Naive thymus-derived CD4-positive, alpha-beta T cell (primary cell): ENCODE measurements at regions of chr2 and their contacts with region 1.

Region 1: DNA sequence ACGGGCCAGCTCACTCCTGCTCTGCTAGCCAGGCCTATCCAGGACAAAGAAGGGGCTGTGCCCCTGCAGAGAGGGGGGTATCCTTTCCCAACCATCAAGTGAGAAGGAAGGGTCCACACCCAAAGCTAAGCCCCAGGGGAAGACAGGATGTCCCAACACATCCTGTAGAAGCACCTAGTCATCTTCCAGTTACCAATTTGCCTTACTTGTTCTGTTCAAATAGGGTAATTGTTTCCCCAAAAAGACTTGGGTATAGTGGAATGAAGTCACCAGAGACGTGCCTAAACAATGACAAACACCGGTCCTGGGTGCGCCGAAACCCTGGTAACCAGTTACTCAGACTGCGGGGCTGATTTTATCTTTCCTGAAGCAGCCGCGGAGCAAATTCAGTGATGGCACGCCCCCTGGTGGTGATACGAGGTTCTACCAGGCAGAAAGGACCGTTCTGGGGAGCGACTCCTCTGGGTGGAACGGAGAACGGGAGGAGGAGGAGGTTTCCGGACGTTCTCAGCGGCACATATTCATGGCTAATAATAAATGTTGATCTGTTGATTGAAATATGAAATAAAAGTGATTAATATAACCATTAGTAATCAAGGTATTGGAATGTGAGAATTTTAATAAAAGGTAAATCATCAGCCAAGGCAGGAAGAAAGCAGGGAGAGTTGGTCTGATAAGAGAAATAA is 109.3 kb upstream of the STON1 start:
- DNase-seq: peak; percentile 79 to 92 (median 88)
- ATAC-seq: peak; percentile 97
- H3K4me3 ChIP-seq: peak overlapping the region; percentile 33
- H3K4me3 Mint-ChIP-seq: peak overlapping the region in 9 of 10 donors; percentile 16 to 68 (median 49)
- H3K27ac ChIP-seq: peak overlapping the region; percentile 25
- H3K27ac Mint-ChIP-seq: peak overlapping the region in 8 of 9 donors; percentile 52 to 82 (median 72)
- H3K4me1 ChIP-seq: peaks cover 4 to 14% of the 10 kb centered on the region in 2 donors
- H3K4me1 Mint-ChIP-seq: peaks cover 14 to 39% (median 32%) of the 10 kb centered on the region in 7 donors
- H3K27me3 ChIP-seq: no peaks in the 10 kb centered on the region
- H3K27me3 Mint-ChIP-seq: peaks cover 0 to 4% (median 0%) of the 10 kb centered on the region in 5 donors

Region 2: GRCh38 chr2:47833516-47833968 is 587.1 kb before region 1 on chr2:
- CTCF ChIA-PET with region 1: no interaction called
- POLR2A ChIA-PET with region 1: no interaction called
- intact Hi-C with region 1: no loop called
- DNase-seq: no peak
- ATAC-seq: no peak
- H3K4me3 ChIP-seq: no peak overlapping the region
- H3K4me3 Mint-ChIP-seq: no peak overlapping the region
- H3K27ac ChIP-seq: no peak overlapping the region
- H3K27ac Mint-ChIP-seq: no peak overlapping the region
- H3K4me1 ChIP-seq: no peaks in the 10 kb centered on the region
- H3K4me1 Mint-ChIP-seq: peaks cover 0 to 5% (median 0%) of the 10 kb centered on the region in 7 donors
- H3K27me3 ChIP-seq: no peaks in the 10 kb centered on the region
- H3K27me3 Mint-ChIP-seq: no peaks in the 10 kb centered on the region

Region 3: GRCh38 chr2:47862949-47863348 is 557.7 kb before region 1 on chr2:
- CTCF ChIA-PET with region 1: interaction called, 5 read pairs
- POLR2A ChIA-PET with region 1: interaction called, 3 read pairs
- intact Hi-C with region 1: loop called in 1 of 2 experiments (anchors 5 kb)
- DNase-seq: no peak
- ATAC-seq: no peak
- H3K4me3 ChIP-seq: no peak overlapping the region
- H3K4me3 Mint-ChIP-seq: no peak overlapping the region
- H3K27ac ChIP-seq: no peak overlapping the region
- H3K27ac Mint-ChIP-seq: peak overlapping the region in 6 of 9 donors; percentile 1 to 61 (median 26)
- H3K4me1 ChIP-seq: peaks cover 0 to 15% of the 10 kb centered on the region in 2 donors
- H3K4me1 Mint-ChIP-seq: peaks cover 25 to 87% (median 76%) of the 10 kb centered on the region in 7 donors
- H3K27me3 ChIP-seq: no peaks in the 10 kb centered on the region
- H3K27me3 Mint-ChIP-seq: no peaks in the 10 kb centered on the region

Region 4: GRCh38 chr2:48200620-48201293 is 219.9 kb before region 1 on chr2:
- CTCF ChIA-PET with region 1: no interaction called
- POLR2A ChIA-PET with region 1: no interaction called
- intact Hi-C with region 1: loop called in 1 of 2 experiments (anchors 5 kb)
- DNase-seq: no peak
- ATAC-seq: no peak
- H3K4me3 ChIP-seq: no peak overlapping the region
- H3K4me3 Mint-ChIP-seq: no peak overlapping the region
- H3K27ac ChIP-seq: no peak overlapping the region
- H3K27ac Mint-ChIP-seq: no peak overlapping the region
- H3K4me1 ChIP-seq: no peaks in the 10 kb centered on the region
- H3K4me1 Mint-ChIP-seq: peaks cover 0 to 7% (median 0%) of the 10 kb centered on the region in 7 donors
- H3K27me3 ChIP-seq: no peaks in the 10 kb centered on the region
- H3K27me3 Mint-ChIP-seq: no peaks in the 10 kb centered on the region

Region 5: GRCh38 chr2:48221846-48222516 is 198.7 kb before region 1 on chr2:
- CTCF ChIA-PET with region 1: no interaction called
- POLR2A ChIA-PET with region 1: no interaction called
- intact Hi-C with region 1: no loop called
- DNase-seq: no peak
- ATAC-seq: no peak
- H3K4me3 ChIP-seq: no peak overlapping the region
- H3K4me3 Mint-ChIP-seq: peak overlapping the region in 1 of 10 donors; percentile 3
- H3K27ac ChIP-seq: no peak overlapping the region
- H3K27ac Mint-ChIP-seq: peak overlapping the region in 2 of 9 donors; percentile 6 to 9
- H3K4me1 ChIP-seq: no peaks in the 10 kb centered on the region
- H3K4me1 Mint-ChIP-seq: peaks cover 0 to 14% (median 6%) of the 10 kb centered on the region in 7 donors
- H3K27me3 ChIP-seq: no peaks in the 10 kb centered on the region
- H3K27me3 Mint-ChIP-seq: peaks cover 0 to 3% (median 0%) of the 10 kb centered on the region in 5 donors

Region 6: DNA sequence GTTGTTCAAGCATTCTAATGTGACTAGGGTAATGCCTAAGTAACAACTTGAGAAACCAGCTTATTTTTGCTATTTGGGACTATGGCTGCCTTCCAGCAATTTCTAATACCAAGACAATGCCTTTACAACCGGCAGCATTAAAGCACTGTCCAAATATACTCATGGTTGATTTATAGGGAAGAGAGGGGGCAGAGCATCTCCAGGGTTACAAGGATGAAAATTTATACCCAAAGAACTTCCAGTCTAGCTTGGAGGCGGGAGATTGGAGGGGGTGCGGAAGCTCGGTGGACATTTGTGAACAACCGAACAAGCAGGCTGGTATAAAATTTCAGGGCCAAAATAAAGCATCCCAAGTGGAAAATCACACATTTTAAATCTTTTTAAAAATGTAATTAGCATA is 185.6 kb before region 1 on chr2:
- CTCF ChIA-PET with region 1: no interaction called
- POLR2A ChIA-PET with region 1: interaction called, 3 read pairs
- intact Hi-C with region 1: loop called in 1 of 2 experiments (anchors 5 kb)
- DNase-seq: no peak
- ATAC-seq: no peak
- H3K4me3 ChIP-seq: no peak overlapping the region
- H3K4me3 Mint-ChIP-seq: no peak overlapping the region
- H3K27ac ChIP-seq: no peak overlapping the region
- H3K27ac Mint-ChIP-seq: peak overlapping the region in 3 of 9 donors; percentile 5 to 29 (median 16)
- H3K4me1 ChIP-seq: peaks cover 0 to 11% of the 10 kb centered on the region in 2 donors
- H3K4me1 Mint-ChIP-seq: peaks cover 9 to 25% (median 16%) of the 10 kb centered on the region in 7 donors
- H3K27me3 ChIP-seq: no peaks in the 10 kb centered on the region
- H3K27me3 Mint-ChIP-seq: no peaks in the 10 kb centered on the region

Region 7: DNA sequence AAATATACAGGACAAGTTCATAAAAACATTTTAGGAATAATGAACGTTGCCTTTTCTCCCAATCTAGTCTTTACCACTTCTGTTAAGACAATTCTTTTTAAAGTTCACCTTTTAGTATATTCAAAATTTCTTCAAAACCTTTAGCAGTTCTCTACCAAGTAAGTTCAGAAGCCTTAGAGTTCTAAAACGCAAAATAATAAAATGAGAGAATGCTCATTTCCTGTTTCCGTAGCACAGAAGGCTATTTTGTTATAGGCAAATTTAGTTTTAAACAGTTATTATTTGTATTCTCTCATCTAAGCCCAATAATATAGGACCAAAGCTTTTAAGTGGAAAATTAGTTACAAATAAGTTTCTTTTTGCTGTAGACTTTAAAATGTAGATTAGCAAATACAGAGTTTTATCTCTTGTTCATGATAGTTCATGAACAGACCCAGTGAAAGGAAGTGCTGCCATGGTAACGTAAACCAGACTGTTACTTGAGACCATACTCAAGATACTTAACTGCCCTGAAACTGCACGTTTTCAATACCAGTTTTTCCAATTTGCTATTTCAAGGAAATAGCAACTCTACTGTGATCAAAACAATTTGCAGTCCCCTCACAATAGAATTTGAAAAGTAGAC is 63.8 kb before region 1 on chr2:
- CTCF ChIA-PET with region 1: no interaction called
- POLR2A ChIA-PET with region 1: interaction called, 4 read pairs
- intact Hi-C with region 1: loop called (anchors 1 to 2 kb)
- DNase-seq: peak in 7 of 9 donors; percentile 53 to 77 (median 72)
- ATAC-seq: peak; percentile 88
- H3K4me3 ChIP-seq: peak overlapping the region; percentile 0
- H3K4me3 Mint-ChIP-seq: peak overlapping the region; percentile 5 to 84 (median 72)
- H3K27ac ChIP-seq: peak overlapping the region; percentile 72
- H3K27ac Mint-ChIP-seq: peak overlapping the region; percentile 84 to 97 (median 95)
- H3K4me1 ChIP-seq: peaks cover 15 to 50% of the 10 kb centered on the region in 2 donors
- H3K4me1 Mint-ChIP-seq: peaks cover 46 to 77% (median 67%) of the 10 kb centered on the region in 7 donors
- H3K27me3 ChIP-seq: no peaks in the 10 kb centered on the region
- H3K27me3 Mint-ChIP-seq: no peaks in the 10 kb centered on the region